IMR-90 (cell line): ENCODE measurements at regions of chr15 and their contacts with region 1.

Region 1: GRCh38 chr15:93603550-93603949 is 514.5 kb upstream of the RGMA start:
- DNase-seq: no peak
- ATAC-seq: no peak
- H3K4me3 ChIP-seq: no peak overlapping the region
- H3K27ac ChIP-seq: no peak overlapping the region
- H3K4me1 ChIP-seq: no peaks in the 10 kb centered on the region
- H3K27me3 ChIP-seq: no peaks in the 10 kb centered on the region
- CTCF ChIP-seq: no peak
- POLR2A ChIP-seq: no peak
- RAD21 ChIP-seq: no peak

Region 2: GRCh38 chr15:94061041-94061440 is 457.5 kb after region 1 on chr15:
- CTCF ChIA-PET with region 1: no interaction called
- POLR2A ChIA-PET with region 1: interaction called, 19 read pairs
- dilution Hi-C with region 1: no loop called
- in situ Hi-C with region 1: no loop called
- intact Hi-C with region 1: no loop called
- DNase-seq: peak; percentile 11
- ATAC-seq: no peak
- H3K4me3 ChIP-seq: no peak overlapping the region
- H3K27ac ChIP-seq: no peak overlapping the region
- H3K4me1 ChIP-seq: no peaks in the 10 kb centered on the region
- H3K27me3 ChIP-seq: no peaks in the 10 kb centered on the region; the same call in 1 of the 2 replicates
- CTCF ChIP-seq: no peak
- POLR2A ChIP-seq: no peak
- RAD21 ChIP-seq: no peak